KBM-7 (cell line): ENCODE measurements at regions of chr7 and their contacts with region 1.

Region 1: DNA sequence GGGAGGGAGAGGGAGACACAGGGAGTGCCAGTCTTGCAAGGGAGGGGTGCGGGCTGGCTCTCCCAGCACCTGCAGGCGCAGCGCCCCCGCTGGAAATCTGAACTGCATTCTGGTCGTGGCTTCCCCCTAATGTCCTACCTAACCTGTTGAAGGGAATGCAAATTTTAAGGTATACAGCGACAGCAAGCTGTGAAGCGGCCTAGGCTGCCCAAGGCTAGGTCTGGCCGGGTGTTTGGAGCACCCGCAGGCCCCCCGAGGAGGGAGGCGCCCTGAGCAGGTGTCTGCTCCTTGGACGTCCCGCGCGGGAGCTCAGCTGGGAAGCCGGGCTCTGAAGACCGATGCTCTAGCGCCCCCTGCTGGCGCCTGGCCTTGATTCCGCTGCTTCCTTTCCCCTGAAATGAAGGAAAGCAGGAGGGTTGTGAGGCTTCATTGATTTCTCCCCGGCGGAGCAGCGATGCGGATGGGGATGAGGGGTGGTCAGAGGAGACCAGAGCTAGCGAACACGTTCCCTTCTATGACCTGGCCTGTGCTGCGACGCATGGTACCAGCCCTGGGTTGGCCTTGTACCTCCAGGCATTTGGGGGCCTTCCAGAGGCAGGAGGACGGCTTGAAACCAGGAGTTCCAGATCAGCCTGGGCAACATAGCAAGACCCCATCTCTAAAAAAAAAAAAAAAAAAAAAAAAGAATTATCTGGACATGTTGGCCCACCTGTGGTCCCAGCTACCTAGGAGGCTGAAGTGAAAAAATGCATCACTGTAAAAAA is 601.3 kb downstream of the GALNT17 start:
- DNase-seq: peak; percentile 82

Region 2: DNA sequence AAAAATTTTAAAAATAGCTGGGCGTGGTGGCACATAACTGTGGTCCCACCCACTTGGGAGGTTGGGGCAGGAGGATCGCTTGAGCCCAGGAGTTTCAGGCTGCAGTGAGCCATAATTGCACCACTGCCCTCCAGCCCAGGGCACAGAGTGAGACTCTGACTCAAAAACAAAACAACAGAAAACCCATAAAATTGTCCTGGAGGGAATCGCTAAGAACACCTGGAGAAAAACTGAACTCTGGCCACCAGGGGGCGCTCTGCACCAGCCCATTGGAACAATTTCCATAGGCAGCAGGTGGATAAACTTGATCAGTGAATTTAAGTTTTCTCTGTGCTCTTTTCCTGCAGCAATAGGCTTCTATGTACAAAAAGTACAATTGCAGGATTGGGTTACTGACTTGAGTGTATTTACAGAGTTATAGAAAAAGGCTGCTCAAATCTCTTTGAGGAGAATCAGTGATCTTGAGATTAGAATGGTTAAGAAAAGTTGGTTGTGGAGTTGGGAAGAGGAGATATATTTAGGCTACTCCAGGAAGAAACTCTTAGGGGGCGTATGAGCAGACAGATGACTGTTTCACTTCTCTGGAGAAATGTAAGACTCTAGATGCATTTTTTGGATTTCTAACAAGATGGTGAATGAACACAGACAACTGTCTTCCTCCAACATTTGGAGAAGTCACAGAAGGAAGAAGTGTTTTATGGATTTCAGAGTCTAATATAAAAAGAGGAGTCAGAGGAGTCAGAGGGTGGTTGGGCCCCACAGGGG is 876.2 kb before region 1 on chr7:
- in situ Hi-C with region 1: loop called (anchors 25 kb)
- DNase-seq: peak; percentile 60

Region 3: DNA sequence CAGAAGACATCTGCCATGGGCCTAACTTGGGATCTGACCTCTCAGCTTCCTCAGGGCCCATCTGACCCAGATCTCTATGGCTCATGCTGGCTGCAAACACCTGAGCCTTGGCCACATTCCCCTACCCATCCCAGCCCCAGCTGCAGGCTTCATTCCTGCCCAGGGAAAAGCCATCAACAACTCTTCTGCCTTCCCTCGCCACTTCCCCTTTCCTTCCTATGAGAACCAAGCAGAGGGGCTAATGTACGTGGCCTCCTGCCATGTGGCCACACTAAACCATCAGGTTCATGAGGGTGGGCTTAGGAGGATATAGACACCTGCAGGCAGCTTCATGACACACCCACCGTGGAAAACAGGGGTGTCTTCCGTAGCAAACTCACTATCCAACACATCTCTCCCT is 289.2 kb before region 1 on chr7:
- in situ Hi-C with region 1: no loop called
- DNase-seq: peak; percentile 11